ENCODE measurements at regions of chr22 and their contacts with region 1.

Region 1: DNA sequence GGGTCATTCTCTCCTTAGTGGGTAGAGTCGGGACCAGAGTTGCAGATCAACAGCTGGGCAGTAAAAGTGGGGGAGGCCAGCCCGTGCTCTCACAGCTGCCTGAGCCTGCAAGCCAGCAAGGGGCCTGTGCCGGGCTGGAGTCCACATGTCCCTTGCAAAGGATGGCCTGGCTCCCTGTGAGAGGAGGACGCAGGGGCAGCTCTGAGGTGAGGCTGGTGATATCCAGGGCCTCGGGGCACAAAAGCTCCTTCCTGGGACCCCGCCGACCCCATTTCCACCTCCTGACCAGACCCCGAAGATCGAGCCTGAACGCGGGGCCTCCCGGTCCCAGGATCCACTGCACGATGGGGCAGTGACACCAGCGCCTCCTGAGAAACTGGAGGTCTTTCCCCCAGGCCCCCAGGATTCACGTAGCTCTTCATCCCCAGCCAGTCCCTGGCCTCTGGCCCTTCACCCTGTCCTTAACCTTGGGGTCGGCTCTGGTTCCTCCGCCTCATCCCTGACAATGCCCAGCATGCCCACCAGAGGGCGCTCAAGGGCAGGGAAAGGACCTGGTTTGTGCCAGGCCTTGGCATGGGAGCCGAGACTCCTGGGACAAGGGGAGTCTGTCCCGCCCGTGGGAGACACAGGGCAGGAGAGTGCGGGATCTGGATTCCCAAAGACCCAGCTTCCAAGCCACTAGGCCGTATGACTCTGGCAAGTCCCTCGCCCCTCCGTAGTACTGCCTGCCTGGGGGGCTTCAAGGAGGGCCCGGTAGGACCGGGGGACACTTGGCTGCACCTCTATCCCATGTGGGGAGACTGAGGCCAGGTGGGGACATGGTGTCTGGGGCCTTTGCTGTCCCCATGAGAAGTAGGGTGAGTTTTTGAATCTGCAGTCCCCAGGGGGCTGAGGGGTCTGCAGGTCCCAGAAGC is 17.8 kb upstream of the WNT7B start:
- DNase-seq: peak; percentile 92
- ATAC-seq: peak; percentile 77
- H3K4me3 ChIP-seq: no peak overlapping the region
- H3K27ac ChIP-seq: no peak overlapping the region
- H3K4me1 ChIP-seq: peaks cover 46% of the 10 kb centered on the region
- H3K27me3 ChIP-seq: no peaks in the 10 kb centered on the region
- CTCF ChIP-seq: peak; percentile 99

Region 2: DNA sequence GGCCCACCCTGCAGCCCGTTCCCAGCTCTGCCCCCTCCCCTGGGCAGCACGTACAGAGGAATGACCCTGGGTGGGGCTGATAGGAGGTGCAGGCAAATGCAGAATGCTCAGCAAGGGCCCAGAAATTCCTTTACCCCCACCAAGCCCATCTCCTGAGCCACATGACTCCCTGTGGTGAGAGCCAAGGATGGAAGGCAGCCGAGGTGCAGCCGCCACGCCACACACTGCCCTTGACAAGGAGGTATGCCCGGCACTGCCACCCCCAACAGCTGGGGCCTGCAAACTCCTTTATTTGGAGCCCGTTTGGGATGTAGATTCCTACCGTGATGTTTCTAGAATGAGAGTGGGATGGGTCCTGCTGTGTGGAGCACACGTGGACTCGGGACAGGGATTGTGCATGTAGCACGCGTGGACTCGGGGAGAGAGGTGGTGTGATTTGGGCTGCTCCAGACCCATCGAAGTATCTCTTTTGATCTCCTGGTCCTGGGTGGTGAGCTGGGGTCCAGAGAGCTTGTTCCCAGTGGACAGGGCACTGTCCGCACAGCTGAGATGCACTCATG is 314.9 kb after region 1 on chr22:
- intact Hi-C with region 1: loop called (anchors 10 kb)
- DNase-seq: no peak
- ATAC-seq: no peak
- H3K4me3 ChIP-seq: no peak overlapping the region
- H3K27ac ChIP-seq: no peak overlapping the region
- H3K4me1 ChIP-seq: no peaks in the 10 kb centered on the region
- H3K27me3 ChIP-seq: no peaks in the 10 kb centered on the region
- CTCF ChIP-seq: no peak

Measured in upper lobe of right lung (tissue), 1 donor.